CD4-positive, alpha-beta memory T cell (primary cell): ENCODE measurements at regions of chr7 and their contacts with region 1.

Region 1: GRCh38 chr7:150448789-150449147 is 1.7 kb upstream of the GIMAP8 start:
- DNase-seq: peak; percentile 88 to 91 (median 89)
- H3K4me3 ChIP-seq: peak overlapping the region in 1 of 2 donors; percentile 36
- H3K4me3 Mint-ChIP-seq: peak overlapping the region; percentile 78 to 100 (median 100)
- H3K27ac ChIP-seq: peak overlapping the region; percentile 84
- H3K27ac Mint-ChIP-seq: peak overlapping the region; percentile 84 to 98 (median 96)
- H3K4me1 ChIP-seq: peaks cover 51% of the 10 kb centered on the region
- H3K4me1 Mint-ChIP-seq: peaks cover 34 to 64% (median 46%) of the 10 kb centered on the region in 4 donors
- H3K27me3 ChIP-seq: no peaks in the 10 kb centered on the region
- H3K27me3 Mint-ChIP-seq: no peaks in the 10 kb centered on the region

Region 2: DNA sequence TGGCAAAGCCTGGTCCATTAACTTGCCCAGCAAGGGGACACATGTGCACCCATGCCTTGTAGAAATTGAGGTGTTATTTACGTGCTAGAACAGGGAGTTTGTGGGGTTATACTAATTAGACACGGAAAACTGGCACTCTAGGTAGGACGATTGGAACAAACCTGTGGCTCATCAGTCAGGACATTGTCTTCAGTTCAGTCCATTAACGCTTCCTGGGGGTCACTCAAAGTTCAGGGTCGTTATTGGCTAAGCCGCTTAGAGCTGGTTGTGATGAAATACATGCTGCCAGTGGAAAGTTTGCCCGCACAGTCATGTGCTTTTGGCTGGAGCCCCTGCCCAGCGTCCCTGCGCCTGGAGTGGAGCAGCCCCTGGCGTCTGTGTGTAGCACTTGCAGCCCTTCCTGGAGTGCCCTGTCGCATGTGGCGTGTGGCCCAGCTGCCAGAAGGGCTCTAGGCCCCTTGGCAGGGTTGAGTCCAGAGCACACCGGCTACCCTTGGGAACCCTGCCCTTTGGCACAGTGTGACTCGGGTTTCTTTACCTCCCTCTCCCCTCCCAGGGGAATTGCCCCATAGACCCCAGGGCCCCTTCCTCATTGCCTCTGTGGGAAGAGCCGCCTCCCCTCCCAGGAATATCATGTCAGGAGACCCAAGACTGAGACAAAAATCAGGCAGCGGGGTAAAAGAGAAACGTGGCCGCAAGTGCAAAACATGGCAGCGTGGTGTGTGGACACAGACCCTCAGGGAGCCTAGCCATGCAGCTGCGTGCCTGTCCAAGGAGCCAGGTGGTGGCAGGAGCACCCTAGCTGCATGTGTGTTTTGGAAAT is 59.8 kb before region 1 on chr7:
- CTCF ChIA-PET with region 1: no interaction called
- POLR2A ChIA-PET with region 1: no interaction called
- intact Hi-C with region 1: no loop called
- DNase-seq: no peak
- H3K4me3 ChIP-seq: no peak overlapping the region
- H3K4me3 Mint-ChIP-seq: no peak overlapping the region
- H3K27ac ChIP-seq: no peak overlapping the region
- H3K27ac Mint-ChIP-seq: no peak overlapping the region
- H3K4me1 ChIP-seq: no peaks in the 10 kb centered on the region
- H3K4me1 Mint-ChIP-seq: peaks cover 0 to 2% (median 0%) of the 10 kb centered on the region in 4 donors
- H3K27me3 ChIP-seq: no peaks in the 10 kb centered on the region
- H3K27me3 Mint-ChIP-seq: no peaks in the 10 kb centered on the region

Region 3: DNA sequence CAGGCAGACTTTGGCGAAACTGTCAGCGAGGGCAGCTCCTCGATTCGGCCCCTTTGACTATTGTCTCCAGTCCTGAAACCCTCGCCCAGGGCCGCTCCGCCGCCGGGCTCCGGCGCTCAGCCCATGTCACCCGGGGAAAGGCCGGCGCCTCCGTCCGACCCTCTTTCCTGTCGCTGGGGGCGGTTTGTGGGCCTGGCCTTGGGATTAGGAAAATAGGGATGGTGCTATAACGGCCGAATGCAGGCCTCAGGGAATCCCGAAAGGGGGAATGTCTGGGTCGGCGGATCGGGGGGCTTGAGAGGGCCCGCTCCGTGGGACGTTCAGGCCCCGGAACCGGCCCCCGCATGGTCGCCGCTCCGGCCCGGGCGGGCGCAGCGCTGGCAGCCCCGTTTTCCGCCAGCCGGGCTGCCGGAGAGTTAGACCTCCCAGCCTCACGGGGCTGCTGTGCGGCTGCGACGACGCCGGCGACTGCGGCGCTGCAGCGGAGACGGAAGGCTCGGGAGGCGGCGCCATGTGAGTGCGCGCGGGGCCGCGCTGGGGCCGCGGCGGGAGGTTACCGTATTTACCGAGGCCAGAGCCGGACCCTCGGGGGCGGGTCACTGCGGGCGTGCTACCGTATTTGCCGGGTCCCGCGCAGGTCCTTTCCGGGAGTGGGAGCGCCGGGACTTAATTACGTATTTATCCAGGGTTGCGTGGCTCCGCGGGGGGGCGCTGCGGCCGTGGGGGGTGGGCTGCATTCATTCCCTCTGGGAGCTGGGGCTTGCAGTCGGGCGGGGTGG is 43.8 kb before region 1 on chr7:
- CTCF ChIA-PET with region 1: interaction called, 7 read pairs
- POLR2A ChIA-PET with region 1: interaction called, 13 read pairs
- intact Hi-C with region 1: no loop called
- DNase-seq: peak; percentile 75 to 80 (median 77)
- H3K4me3 ChIP-seq: peak overlapping the region; percentile 62 to 92
- H3K4me3 Mint-ChIP-seq: peak overlapping the region; percentile 93 to 99 (median 98)
- H3K27ac ChIP-seq: peak overlapping the region; percentile 85
- H3K27ac Mint-ChIP-seq: peak overlapping the region; percentile 80 to 99 (median 98)
- H3K4me1 ChIP-seq: peaks cover 30% of the 10 kb centered on the region
- H3K4me1 Mint-ChIP-seq: peaks cover 21 to 53% (median 39%) of the 10 kb centered on the region in 4 donors
- H3K27me3 ChIP-seq: no peaks in the 10 kb centered on the region
- H3K27me3 Mint-ChIP-seq: no peaks in the 10 kb centered on the region

Region 4: DNA sequence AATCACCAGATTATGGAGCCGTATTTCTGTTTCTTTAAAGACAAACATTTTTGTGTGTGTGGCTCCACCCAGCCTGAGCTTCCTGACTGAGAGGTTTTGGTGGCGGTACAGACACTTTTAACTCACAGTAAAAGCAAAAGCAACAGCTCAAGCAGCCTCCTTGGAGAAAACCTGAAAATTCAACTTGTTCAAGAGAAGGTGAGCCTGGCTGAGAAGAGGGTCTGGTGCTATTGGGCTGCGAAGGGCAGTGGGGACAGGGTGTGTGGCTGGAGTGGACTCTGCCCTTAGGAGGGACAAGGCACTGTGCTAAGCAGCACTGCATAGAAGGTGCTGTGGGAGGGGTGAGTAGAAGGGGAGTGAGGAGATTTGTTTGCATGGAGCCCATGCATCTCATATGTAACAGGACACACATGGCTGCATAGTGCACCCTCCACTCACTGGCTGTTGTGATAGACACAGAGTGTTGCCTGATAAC is 66.0 kb after region 1 on chr7 and contains the start of gene GIMAP7:
- CTCF ChIA-PET with region 1: interaction called, 146 read pairs
- POLR2A ChIA-PET with region 1: interaction called, 1,033 read pairs
- intact Hi-C with region 1: loop called (anchors 1 kb)
- DNase-seq: peak; percentile 77 to 84 (median 79)
- H3K4me3 ChIP-seq: peak within 1 kb of the TSS; percentile 92 to 99
- H3K4me3 Mint-ChIP-seq: peak within 1 kb of the TSS; percentile 97 to 100 (median 100)
- H3K27ac ChIP-seq: peak within 1 kb of the TSS; percentile 77
- H3K27ac Mint-ChIP-seq: peak within 1 kb of the TSS; percentile 94 to 99 (median 97)
- H3K4me1 ChIP-seq: peaks cover 47% of the 10 kb centered on the region
- H3K4me1 Mint-ChIP-seq: peaks cover 36 to 54% (median 42%) of the 10 kb centered on the region in 4 donors
- H3K27me3 ChIP-seq: no peaks in the 10 kb centered on the region
- H3K27me3 Mint-ChIP-seq: no peaks in the 10 kb centered on the region
- total RNA-seq, gene GIMAP7: 464 to 476 TPM

Region 5: GRCh38 chr7:150631866-150632864 is 183.4 kb after region 1 on chr7 and contains the start of gene GIMAP6:
- CTCF ChIA-PET with region 1: interaction called, 18 read pairs
- POLR2A ChIA-PET with region 1: interaction called, 138 read pairs
- intact Hi-C with region 1: loop called (anchors 1 kb)
- DNase-seq: peak; percentile 36 to 51 (median 44)
- H3K4me3 ChIP-seq: peak within 1 kb of the TSS; percentile 69 to 75
- H3K4me3 Mint-ChIP-seq: peak within 1 kb of the TSS; percentile 93 to 100 (median 98)
- H3K27ac ChIP-seq: peak within 1 kb of the TSS; percentile 64
- H3K27ac Mint-ChIP-seq: peak within 1 kb of the TSS; percentile 81 to 99 (median 95)
- H3K4me1 ChIP-seq: peaks cover 79% of the 10 kb centered on the region
- H3K4me1 Mint-ChIP-seq: peaks cover 61 to 88% (median 74%) of the 10 kb centered on the region in 4 donors
- H3K27me3 ChIP-seq: no peaks in the 10 kb centered on the region
- H3K27me3 Mint-ChIP-seq: no peaks in the 10 kb centered on the region
- total RNA-seq, gene GIMAP6: 158 to 173 TPM

Region 6: DNA sequence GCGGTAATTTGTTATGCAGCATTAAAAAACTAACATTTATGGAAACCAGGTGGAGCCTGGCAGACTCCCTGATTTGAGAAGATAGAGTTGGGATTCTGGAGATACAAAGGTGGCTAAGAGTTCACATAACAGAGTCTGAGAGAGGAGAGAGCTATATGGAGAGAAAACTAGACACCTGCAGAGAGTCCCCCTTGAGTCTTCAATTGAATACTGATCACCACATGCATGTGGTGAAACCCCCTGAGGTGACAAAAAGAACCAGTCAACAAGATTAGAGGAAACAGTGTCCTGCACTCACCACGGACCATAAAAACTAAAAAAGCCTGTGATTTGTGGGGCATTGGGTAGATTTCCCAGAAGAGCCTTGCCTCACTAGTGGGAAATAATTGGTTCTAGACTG is 246.9 kb after region 1 on chr7:
- CTCF ChIA-PET with region 1: interaction called, 3 read pairs
- POLR2A ChIA-PET with region 1: interaction called, 13 read pairs
- intact Hi-C with region 1: no loop called
- DNase-seq: no peak
- H3K4me3 ChIP-seq: no peak overlapping the region
- H3K4me3 Mint-ChIP-seq: peak overlapping the region in 2 of 8 donors; percentile 57
- H3K27ac ChIP-seq: no peak overlapping the region
- H3K27ac Mint-ChIP-seq: peak overlapping the region in 1 of 7 donors; percentile 4
- H3K4me1 ChIP-seq: peaks cover 6% of the 10 kb centered on the region
- H3K4me1 Mint-ChIP-seq: peaks cover 5 to 20% (median 13%) of the 10 kb centered on the region in 4 donors
- H3K27me3 ChIP-seq: no peaks in the 10 kb centered on the region
- H3K27me3 Mint-ChIP-seq: no peaks in the 10 kb centered on the region

Region 7: DNA sequence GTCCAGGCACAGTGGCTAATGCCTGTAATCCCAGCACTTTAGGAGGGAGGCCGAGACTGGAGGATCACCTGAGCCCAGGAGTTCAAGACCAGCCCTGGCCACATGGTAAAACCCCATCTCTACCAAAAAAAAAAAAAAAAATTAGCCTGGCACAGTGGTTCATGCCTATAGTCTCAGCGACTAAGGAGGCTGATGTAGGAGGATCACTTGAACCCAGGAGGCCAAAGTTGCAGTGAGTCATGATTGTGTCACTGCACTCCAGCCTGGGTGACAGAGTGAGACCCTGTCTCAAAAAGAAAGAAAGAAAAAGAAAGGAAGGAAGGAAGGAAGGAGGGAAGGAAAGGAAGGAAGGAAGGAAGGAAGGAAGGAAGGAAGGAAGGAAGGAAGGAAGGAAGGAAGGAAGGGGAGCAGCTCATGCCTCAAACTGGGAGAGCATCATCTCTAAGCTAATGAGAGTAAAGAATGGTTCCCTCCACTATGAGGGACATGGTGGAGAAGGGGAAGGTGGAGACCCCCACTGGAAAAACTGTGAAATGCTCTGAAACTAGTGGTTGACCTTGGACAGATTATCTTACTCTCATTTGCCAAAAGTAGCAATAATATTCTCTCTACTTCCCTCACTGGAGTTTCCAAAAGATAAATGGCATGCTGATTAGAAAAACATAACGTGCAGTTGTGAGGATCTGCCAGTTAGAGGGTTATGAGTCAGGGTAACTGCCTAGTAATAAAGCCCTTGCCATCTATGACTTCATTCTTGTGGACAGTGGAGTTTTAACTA is 305.2 kb after region 1 on chr7:
- CTCF ChIA-PET with region 1: interaction called, 93 read pairs
- POLR2A ChIA-PET with region 1: interaction called, 288 read pairs
- intact Hi-C with region 1: loop called (anchors 1 kb)
- DNase-seq: peak in 1 of 5 donors; percentile 45
- H3K4me3 ChIP-seq: no peak overlapping the region
- H3K4me3 Mint-ChIP-seq: peak overlapping the region in 7 of 8 donors; percentile 8 to 76 (median 52)
- H3K27ac ChIP-seq: peak overlapping the region; percentile 37
- H3K27ac Mint-ChIP-seq: peak overlapping the region; percentile 90 to 97 (median 93)
- H3K4me1 ChIP-seq: peaks cover 80% of the 10 kb centered on the region
- H3K4me1 Mint-ChIP-seq: peaks cover 56 to 79% (median 68%) of the 10 kb centered on the region in 4 donors
- H3K27me3 ChIP-seq: no peaks in the 10 kb centered on the region
- H3K27me3 Mint-ChIP-seq: peaks cover 0 to 2% of the 10 kb centered on the region in 2 donors